Heart left ventricle (tissue), 16 donors: ENCODE measurements at regions of chr18 and their contacts with region 1.

Region 1: GRCh38 chr18:79092874-79093273 is 23.7 kb downstream of the ATP9B start:
- DNase-seq: no peak
- ATAC-seq: no peak
- H3K4me3 ChIP-seq: no peak overlapping the region
- H3K27ac ChIP-seq: no peak overlapping the region
- H3K4me1 ChIP-seq: peaks cover 0 to 14% (median 0%) of the 10 kb centered on the region in 12 donors
- H3K27me3 ChIP-seq: no peaks in the 10 kb centered on the region
- CTCF ChIP-seq: no peak
- POLR2A ChIP-seq: no peak

Region 2: DNA sequence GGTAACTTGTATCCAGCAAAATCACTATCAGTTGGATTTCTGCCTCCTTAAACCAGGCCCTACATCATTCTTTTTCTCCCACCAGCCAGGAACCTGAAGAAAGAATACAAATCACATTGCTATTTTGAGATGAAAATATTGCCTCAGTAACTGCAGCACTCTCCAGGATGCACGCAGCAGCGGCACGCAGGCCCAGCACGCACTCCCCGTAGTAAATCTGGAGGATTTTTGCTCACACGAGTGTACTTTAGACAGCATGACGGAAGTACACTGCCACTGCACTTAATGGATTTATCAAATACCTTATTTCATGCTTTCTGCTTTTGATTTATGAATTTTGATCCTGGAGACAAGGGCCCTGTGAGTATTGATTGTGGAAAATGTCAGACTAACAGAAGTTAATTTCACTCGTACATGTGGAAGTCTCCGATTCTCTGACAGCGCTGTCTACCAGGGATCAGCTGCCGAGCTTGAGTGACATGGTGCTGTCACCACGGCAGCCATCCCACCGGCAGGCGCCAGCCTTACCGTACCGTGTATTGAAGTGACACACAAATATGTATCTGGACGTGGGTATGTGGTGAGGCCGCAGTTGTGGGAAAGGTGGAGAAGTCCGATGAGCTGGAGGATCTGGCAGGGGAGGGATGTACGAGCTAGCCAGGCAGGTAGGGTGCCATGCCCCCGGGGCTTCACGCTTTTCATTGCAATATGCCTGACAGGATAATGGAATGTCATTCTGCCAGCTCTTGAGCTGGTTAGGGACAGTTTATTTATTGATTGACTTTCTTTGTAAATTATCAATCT is 979.5 kb before region 1 on chr18:
- intact Hi-C with region 1: no loop called
- DNase-seq: no peak
- ATAC-seq: no peak
- H3K4me3 ChIP-seq: no peak overlapping the region
- H3K27ac ChIP-seq: no peak overlapping the region
- H3K4me1 ChIP-seq: no peaks in the 10 kb centered on the region
- H3K27me3 ChIP-seq: no peaks in the 10 kb centered on the region
- CTCF ChIP-seq: no peak
- POLR2A ChIP-seq: no peak

Region 3: DNA sequence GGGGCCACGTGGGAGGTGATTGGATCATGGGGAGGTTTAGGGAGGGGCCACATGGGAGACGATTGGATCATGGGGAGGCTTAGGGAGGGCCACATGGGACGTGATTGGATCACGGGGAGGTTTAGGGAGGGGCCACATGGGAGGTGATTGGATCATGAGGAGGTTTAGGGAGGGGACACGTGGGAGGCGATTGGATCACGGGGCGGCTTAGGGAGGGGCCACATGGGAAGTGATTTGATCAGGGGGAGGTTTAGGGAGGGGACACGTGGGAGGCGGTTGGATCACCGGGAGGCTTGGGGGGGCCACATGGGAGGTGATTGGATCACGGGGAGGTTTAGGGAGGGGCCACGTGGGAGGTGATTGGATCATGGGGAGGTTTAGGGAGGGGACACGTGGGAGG is 135.7 kb before region 1 on chr18:
- intact Hi-C with region 1: no loop called
- DNase-seq: no peak
- ATAC-seq: no peak
- H3K4me3 ChIP-seq: no peak overlapping the region
- H3K27ac ChIP-seq: no peak overlapping the region
- H3K4me1 ChIP-seq: no peaks in the 10 kb centered on the region
- H3K27me3 ChIP-seq: peaks cover 0 to 11% (median 0%) of the 10 kb centered on the region in 9 donors
- CTCF ChIP-seq: no peak
- POLR2A ChIP-seq: no peak

Region 4: GRCh38 chr18:79834834-79835233 is 742.0 kb after region 1 on chr18:
- intact Hi-C with region 1: loop called in 1 of 10 experiments (anchors 10 kb)
- DNase-seq: no peak
- ATAC-seq: no peak
- H3K4me3 ChIP-seq: no peak overlapping the region
- H3K27ac ChIP-seq: no peak overlapping the region
- H3K4me1 ChIP-seq: no peaks in the 10 kb centered on the region
- H3K27me3 ChIP-seq: peaks cover 0 to 18% (median 5%) of the 10 kb centered on the region in 9 donors
- CTCF ChIP-seq: no peak
- POLR2A ChIP-seq: no peak